Activated CD4-positive, alpha-beta T cell treated with anti-CD3 and anti-CD28 coated beads for 36 hours (primary cell): ENCODE measurements at regions of chr12 and their contacts with region 1.

Region 1: GRCh38 chr12:8662593-8662992 is at the start of gene MFAP5:
- DNase-seq: no peak
- ATAC-seq: no peak
- H3K4me3 Mint-ChIP-seq: no peak within 1 kb of the TSS
- H3K27ac Mint-ChIP-seq: no peak within 1 kb of the TSS
- H3K4me1 Mint-ChIP-seq: no peaks in the 10 kb centered on the region
- H3K27me3 Mint-ChIP-seq: peaks cover 4% of the 10 kb centered on the region
- total RNA-seq, gene MFAP5: not detected

Region 2: DNA sequence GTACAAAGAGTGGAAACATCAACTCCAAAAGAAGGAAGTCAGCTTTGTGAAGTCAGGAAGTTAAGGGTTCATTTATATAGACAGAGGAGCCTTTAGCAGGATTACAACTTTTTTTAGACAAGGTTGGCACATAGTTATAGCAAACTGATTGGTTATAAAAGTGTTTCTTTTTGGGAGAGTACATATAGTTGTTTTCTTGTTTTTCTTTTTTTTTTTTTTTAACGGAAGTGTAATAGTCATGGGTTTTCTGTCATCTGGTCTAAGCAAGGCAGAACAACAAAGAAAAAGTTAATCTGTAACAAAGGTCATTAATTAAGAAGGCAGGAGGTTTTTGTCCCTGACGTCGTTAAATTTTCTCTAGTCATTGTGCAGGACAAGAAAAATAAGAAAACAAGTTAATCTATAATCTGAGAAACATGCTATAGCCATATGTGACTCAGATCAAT is 13.0 kb after region 1 on chr12:
- CTCF ChIA-PET with region 1: interaction called, 11 read pairs
- POLR2A ChIA-PET with region 1: no interaction called
- intact Hi-C with region 1: no loop called
- DNase-seq: no peak
- ATAC-seq: no peak
- H3K4me3 Mint-ChIP-seq: no peak overlapping the region
- H3K27ac Mint-ChIP-seq: no peak overlapping the region
- H3K4me1 Mint-ChIP-seq: peaks cover 6% of the 10 kb centered on the region
- H3K27me3 Mint-ChIP-seq: no peaks in the 10 kb centered on the region

Region 3: GRCh38 chr12:9404469-9405260 is 742.1 kb after region 1 on chr12:
- CTCF ChIA-PET with region 1: no interaction called
- POLR2A ChIA-PET with region 1: no interaction called
- intact Hi-C with region 1: no loop called
- DNase-seq: peak; percentile 22
- ATAC-seq: no peak
- H3K4me3 Mint-ChIP-seq: no peak overlapping the region
- H3K27ac Mint-ChIP-seq: no peak overlapping the region
- H3K4me1 Mint-ChIP-seq: no peaks in the 10 kb centered on the region
- H3K27me3 Mint-ChIP-seq: no peaks in the 10 kb centered on the region

Region 4: GRCh38 chr12:10600988-10601387 is 1938.4 kb after region 1 on chr12:
- CTCF ChIA-PET with region 1: no interaction called
- POLR2A ChIA-PET with region 1: no interaction called
- intact Hi-C with region 1: no loop called
- DNase-seq: no peak
- ATAC-seq: no peak
- H3K4me3 Mint-ChIP-seq: no peak overlapping the region
- H3K27ac Mint-ChIP-seq: no peak overlapping the region
- H3K4me1 Mint-ChIP-seq: peaks cover 8% of the 10 kb centered on the region
- H3K27me3 Mint-ChIP-seq: no peaks in the 10 kb centered on the region